Activated CD4-positive, alpha-beta memory T cell treated with anti-CD3 and anti-CD28 coated beads for 36 hours (primary cell): ENCODE measurements at regions of chr15 and their contacts with region 1.

Region 1: GRCh38 chr15:92845126-92845508 is 55.0 kb upstream of the CHD2 start:
- DNase-seq: no peak
- H3K4me3 Mint-ChIP-seq: peak overlapping the region; percentile 57
- H3K27ac Mint-ChIP-seq: peak overlapping the region; percentile 89
- H3K4me1 Mint-ChIP-seq: peaks cover 70% of the 10 kb centered on the region
- H3K27me3 Mint-ChIP-seq: no peaks in the 10 kb centered on the region

Region 2: GRCh38 chr15:92820236-92821021 is 24.7 kb before region 1 on chr15:
- CTCF ChIA-PET with region 1: interaction called, 3 read pairs
- POLR2A ChIA-PET with region 1: interaction called, 3 read pairs
- intact Hi-C with region 1: loop called (anchors 1 kb)
- DNase-seq: peak; percentile 92
- H3K4me3 Mint-ChIP-seq: peak overlapping the region; percentile 83
- H3K27ac Mint-ChIP-seq: peak overlapping the region; percentile 83
- H3K4me1 Mint-ChIP-seq: peaks cover 59% of the 10 kb centered on the region
- H3K27me3 Mint-ChIP-seq: no peaks in the 10 kb centered on the region